T-cell (primary cell): ENCODE measurements at regions of chr2 and their contacts with region 1.

Region 1: DNA sequence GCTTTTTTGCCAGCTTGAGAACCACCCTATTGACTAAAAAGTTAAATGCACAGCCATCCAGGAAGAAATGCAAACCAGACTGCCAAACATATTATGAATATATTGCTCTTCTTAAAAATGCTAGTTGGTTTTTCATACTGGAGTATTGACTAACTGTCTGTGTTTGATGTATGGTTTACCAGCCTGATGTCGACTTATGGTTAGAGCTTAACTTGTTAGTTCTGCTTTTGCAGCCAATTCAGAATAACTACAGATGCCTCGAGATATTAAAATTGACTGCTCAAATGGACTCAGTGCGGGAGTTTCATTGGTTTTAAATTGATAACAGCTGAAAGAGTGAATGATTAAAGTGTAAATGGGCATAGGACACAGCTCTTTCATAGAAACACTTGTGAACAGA is 369.8 kb downstream of the ARHGAP15 start:
- DNase-seq: no peak
- ATAC-seq: no peak
- H3K4me3 ChIP-seq: no peak overlapping the region
- H3K4me3 Mint-ChIP-seq: no peak overlapping the region
- H3K27ac ChIP-seq: no peak overlapping the region
- H3K27ac Mint-ChIP-seq: peak overlapping the region; percentile 2 to 38
- H3K4me1 ChIP-seq: no peaks in the 10 kb centered on the region
- H3K4me1 Mint-ChIP-seq: peaks cover 53 to 55% (median 54%) of the 10 kb centered on the region in 3 donors
- H3K27me3 ChIP-seq: no peaks in the 10 kb centered on the region
- H3K27me3 Mint-ChIP-seq: no peaks in the 10 kb centered on the region

Region 2: GRCh38 chr2:143524559-143525401 is 25.7 kb after region 1 on chr2:
- CTCF ChIA-PET with region 1: no interaction called
- POLR2A ChIA-PET with region 1: interaction called in 1 of 2 experiments, 12 read pairs
- DNase-seq: no peak
- ATAC-seq: no peak
- H3K4me3 ChIP-seq: no peak overlapping the region
- H3K4me3 Mint-ChIP-seq: peak overlapping the region in 1 of 3 donors; percentile 1
- H3K27ac ChIP-seq: no peak overlapping the region
- H3K27ac Mint-ChIP-seq: peak overlapping the region; percentile 50 to 81
- H3K4me1 ChIP-seq: peaks cover 7 to 16% of the 10 kb centered on the region in 2 experiments
- H3K4me1 Mint-ChIP-seq: peaks cover 66 to 81% (median 81%) of the 10 kb centered on the region in 3 donors
- H3K27me3 ChIP-seq: no peaks in the 10 kb centered on the region
- H3K27me3 Mint-ChIP-seq: no peaks in the 10 kb centered on the region